Endothelial cell of umbilical vein (primary cell): ENCODE measurements at regions of chr10 and their contacts with region 1.

Region 1: DNA sequence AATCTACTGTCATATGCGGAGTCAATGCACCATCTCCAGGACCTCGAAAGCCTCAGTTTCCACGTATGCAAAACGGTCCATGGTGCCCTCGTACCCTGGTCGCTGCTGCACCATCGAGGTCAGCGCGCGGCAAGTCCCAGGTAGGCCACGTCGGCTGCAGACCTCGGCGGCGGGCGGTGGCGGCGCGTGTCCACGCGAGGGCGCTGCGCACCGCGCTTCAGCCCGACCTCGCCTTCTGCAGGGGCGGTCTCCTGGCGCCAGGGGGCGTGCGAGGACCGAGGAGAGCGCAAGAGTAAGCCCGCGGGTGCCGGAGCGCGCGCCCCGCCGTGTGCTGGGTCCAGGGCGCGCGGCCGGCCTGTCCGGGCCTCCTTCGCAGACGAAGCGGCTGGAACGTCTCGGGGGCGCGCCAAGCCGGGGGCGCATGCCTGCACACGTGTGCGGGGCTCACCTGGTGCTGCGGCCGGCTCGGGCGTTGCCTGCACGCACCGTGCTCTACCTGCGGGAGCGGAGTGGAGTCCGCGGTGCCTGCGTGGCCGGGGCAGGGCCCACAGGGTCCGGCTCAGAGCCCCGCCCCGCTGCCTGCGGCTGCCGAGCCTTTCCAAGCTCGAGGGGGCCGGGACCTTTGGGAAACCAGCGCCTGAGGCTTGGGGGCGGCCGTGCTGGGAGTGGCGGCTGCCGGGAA is 54.0 kb downstream of the GLRX3 start:
- DNase-seq: peak; percentile 89
- H3K4me3 ChIP-seq: peak overlapping the region in 2 of 3 experiments; percentile 39 to 52
- H3K27ac ChIP-seq: no peak overlapping the region
- H3K4me1 ChIP-seq: no peaks in the 10 kb centered on the region
- H3K27me3 ChIP-seq: no peaks in the 10 kb centered on the region
- CTCF ChIP-seq: peak; percentile 98 to 99
- POLR2A ChIP-seq: peak; percentile 19

Region 2: GRCh38 chr10:131786756-131787605 is 1596.8 kb after region 1 on chr10:
- CTCF ChIA-PET with region 1: no interaction called
- POLR2A ChIA-PET with region 1: no interaction called
- dilution Hi-C with region 1: no loop called
- intact Hi-C with region 1: loop called (anchors 1 kb)
- DNase-seq: peak; percentile 12
- H3K4me3 ChIP-seq: no peak overlapping the region
- H3K27ac ChIP-seq: no peak overlapping the region
- H3K4me1 ChIP-seq: no peaks in the 10 kb centered on the region
- H3K27me3 ChIP-seq: no peaks in the 10 kb centered on the region
- CTCF ChIP-seq: peak; percentile 17 to 33
- POLR2A ChIP-seq: no peak

Region 3: DNA sequence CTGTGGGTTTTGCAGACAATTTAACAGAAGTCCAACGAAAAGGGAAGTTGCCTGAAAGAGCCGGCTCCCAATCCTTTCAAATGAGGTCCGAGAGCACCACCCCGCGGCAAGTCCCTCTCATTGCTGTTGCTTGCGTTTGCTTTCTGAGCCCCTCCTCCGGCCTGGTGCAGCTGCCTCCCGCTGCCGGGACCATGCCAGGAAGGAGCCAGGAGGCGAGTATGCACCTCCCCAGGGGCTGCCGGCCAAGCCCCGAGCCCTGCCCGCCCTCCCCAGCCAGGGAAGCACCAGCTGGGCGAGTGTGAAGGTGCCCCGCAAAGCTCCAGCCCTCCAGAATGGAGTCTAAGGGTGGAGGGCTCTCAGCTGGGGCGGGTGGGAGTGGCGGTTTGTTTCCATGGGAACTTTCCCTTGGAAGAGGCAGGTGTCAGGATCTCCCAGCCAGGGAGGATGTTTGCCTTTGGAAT is 1684.8 kb after region 1 on chr10:
- CTCF ChIA-PET with region 1: interaction called, 27 read pairs
- POLR2A ChIA-PET with region 1: no interaction called
- dilution Hi-C with region 1: no loop called
- intact Hi-C with region 1: loop called (anchors 1 kb)
- DNase-seq: peak; percentile 74
- H3K4me3 ChIP-seq: no peak overlapping the region
- H3K27ac ChIP-seq: no peak overlapping the region
- H3K4me1 ChIP-seq: no peaks in the 10 kb centered on the region
- H3K27me3 ChIP-seq: no peaks in the 10 kb centered on the region
- CTCF ChIP-seq: peak; percentile 72 to 85
- POLR2A ChIP-seq: no peak

Region 4: DNA sequence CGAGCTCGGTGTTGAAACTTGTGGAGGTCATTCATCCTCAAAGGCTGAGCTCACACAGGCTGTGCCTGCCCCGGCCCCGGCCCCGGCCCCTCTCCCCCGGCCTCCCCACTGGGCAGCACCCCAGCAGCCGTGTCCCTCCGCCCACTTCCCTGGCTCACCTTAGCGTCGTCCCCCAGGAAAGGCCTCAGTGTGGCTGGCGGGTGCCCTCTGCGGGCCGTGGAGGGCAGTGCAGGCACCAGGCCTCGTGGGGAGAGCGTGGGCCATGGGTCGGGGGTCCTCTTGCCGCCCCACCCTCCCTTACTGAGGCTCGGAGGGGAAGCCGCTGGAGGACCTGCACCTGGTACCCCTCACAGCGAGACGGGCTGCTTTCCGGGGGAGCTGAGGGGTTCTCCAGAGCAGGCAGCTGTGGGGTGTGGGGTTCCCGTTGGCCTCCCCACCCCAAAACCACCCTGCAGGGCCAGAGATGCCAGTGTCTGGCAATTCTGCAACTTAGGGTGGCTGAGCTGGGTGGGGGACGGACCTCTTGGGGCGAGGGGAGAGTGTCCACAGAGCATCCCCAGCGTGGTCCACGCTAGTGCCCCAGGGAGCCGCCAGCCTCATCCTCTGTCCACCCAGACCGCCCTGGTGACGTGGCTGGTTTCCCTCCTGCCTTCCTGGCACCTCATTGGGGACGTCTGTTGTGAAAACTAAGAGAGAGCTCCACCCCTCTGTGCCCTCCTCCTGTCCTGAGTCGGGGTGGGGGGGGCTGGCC is 1952.4 kb after region 1 on chr10:
- CTCF ChIA-PET with region 1: interaction called, 4 read pairs
- POLR2A ChIA-PET with region 1: no interaction called
- dilution Hi-C with region 1: no loop called
- intact Hi-C with region 1: loop called (anchors 10 kb)
- DNase-seq: no peak
- H3K4me3 ChIP-seq: no peak overlapping the region
- H3K27ac ChIP-seq: no peak overlapping the region
- H3K4me1 ChIP-seq: no peaks in the 10 kb centered on the region
- H3K27me3 ChIP-seq: peaks cover 0 to 2% of the 10 kb centered on the region in 2 experiments
- CTCF ChIP-seq: peak; percentile 57 to 80
- POLR2A ChIP-seq: no peak